ENCODE measurements at regions of chr10 and their contacts with region 1.

Region 1: DNA sequence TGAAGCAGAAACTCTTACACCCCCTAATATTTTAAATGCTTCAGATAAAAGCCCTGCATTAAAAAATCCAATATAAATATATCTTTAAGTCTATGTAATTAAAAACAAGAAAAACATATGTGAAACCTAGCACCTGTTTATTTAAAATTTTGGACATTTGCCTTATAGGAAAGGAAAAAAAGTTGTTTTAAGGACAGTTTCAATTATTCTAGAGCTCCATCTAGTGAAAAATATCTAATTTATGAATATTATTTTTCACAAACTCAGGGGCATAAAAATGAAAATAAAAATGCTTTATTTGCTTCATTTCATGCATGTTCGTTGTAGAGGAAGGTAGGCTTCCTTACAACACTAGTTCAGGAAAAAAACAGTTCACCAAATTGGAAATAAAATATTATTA is 26.1 kb downstream of the ENKUR start:
- DNase-seq: no peak
- H3K4me3 ChIP-seq: no peak overlapping the region
- H3K27ac ChIP-seq: no peak overlapping the region
- H3K4me1 ChIP-seq: no peaks in the 10 kb centered on the region
- H3K27me3 ChIP-seq: no peaks in the 10 kb centered on the region
- CTCF ChIP-seq: peak; percentile 60
- EP300 ChIP-seq: no peak
- RAD21 ChIP-seq: peak; percentile 45; the same call in 1 of the 2 replicates

Region 2: GRCh38 chr10:24642622-24643417 is 347.0 kb before region 1 on chr10:
- CTCF ChIA-PET with region 1: interaction called, 17 read pairs
- POLR2A ChIA-PET with region 1: no interaction called
- DNase-seq: peak; percentile 60
- H3K4me3 ChIP-seq: no peak overlapping the region
- H3K27ac ChIP-seq: peak overlapping the region in 1 of 2 experiments; percentile 27; a peak in 1 of 4 replicates
- H3K4me1 ChIP-seq: peaks cover 0 to 4% of the 10 kb centered on the region in 2 experiments; a peak in 2 of 4 replicates
- H3K27me3 ChIP-seq: no peaks in the 10 kb centered on the region
- CTCF ChIP-seq: peak; percentile 85
- EP300 ChIP-seq: no peak
- RAD21 ChIP-seq: peak; percentile 94

Region 3: DNA sequence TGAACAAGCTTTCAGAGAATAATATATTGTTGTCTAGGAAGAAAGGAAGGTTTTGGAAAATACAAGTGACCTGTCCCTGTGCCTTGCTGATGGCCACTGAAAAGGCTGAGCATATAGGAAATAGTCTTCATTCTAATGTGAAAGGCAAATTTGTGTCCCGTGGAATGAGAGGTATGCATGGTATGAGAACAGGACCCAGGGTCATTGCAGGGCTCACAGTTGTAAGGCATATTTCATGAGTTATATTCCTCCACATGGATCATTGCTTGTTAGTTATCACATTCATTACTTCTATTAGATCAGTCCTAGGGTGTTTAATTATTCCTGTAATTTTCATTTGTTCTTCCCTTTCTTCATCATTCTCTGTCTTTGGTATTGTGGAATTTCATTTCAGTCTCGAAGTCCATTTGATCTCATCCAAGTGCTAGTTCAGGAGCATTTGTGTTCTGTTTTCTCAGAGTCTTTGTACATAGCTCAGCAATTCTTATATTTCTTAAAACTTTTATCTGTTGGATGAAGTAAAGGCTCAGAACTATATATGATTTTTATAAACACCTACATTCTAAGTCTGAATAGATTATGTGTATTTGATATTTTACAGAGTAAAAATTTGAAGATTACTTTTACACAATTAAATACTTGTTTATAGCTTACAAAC is 226.8 kb before region 1 on chr10:
- CTCF ChIA-PET with region 1: no interaction called
- POLR2A ChIA-PET with region 1: no interaction called
- DNase-seq: no peak
- H3K4me3 ChIP-seq: no peak overlapping the region
- H3K27ac ChIP-seq: no peak overlapping the region
- H3K4me1 ChIP-seq: no peaks in the 10 kb centered on the region; a peak in 1 of 4 replicates
- H3K27me3 ChIP-seq: no peaks in the 10 kb centered on the region
- CTCF ChIP-seq: no peak
- EP300 ChIP-seq: no peak
- RAD21 ChIP-seq: no peak

Region 4: DNA sequence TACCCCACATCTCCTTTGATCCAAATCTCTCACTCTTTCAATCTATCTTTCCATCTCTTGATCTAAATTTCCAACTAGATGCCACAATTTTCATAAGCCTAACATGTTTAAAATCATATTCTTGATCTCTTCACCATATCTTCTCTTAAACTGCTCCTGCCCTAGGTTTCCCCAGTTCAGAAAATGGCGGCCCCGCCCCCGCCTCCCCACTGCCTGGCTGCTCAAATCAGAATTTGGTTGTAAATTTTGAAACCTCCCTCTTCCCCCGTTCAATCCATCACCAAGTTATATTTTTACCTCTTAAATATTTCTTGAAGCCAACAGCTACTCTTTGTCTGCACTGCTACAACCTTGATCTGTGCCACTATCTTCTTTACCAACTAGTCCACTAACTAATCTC is 10.2 kb before region 1 on chr10:
- CTCF ChIA-PET with region 1: no interaction called
- POLR2A ChIA-PET with region 1: no interaction called
- DNase-seq: no peak
- H3K4me3 ChIP-seq: no peak overlapping the region
- H3K27ac ChIP-seq: no peak overlapping the region
- H3K4me1 ChIP-seq: no peaks in the 10 kb centered on the region
- H3K27me3 ChIP-seq: no peaks in the 10 kb centered on the region
- CTCF ChIP-seq: no peak
- EP300 ChIP-seq: no peak
- RAD21 ChIP-seq: no peak

Region 5: DNA sequence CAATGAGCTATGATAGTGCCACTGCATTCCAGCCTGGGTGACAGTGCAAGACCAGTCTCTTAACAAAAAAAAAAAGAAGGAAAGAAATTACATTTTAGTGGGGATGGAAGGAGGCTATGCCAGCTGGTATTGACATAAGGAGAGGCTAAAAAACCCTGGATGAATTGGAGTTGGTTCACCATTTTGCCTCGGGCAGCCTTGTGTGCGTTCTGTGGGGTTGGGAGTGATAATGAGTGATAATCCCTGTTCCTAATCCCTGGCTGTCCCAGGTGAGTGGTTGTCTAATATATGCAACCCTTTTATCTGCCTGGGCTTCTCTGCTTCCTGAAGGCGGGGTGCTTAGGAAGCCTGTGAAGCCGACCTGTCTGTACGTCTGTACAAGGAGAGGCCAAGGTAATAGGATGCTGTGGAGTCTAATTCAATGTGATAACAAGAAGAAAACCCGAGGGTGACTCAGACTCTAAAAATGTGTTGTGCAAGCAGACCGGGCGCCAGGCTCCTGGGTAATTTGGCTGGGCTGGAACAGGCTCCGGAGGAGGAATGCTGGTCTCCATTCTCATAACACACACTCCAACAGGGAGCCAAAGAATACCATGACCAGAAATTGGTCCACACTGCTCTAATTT is 70.0 kb after region 1 on chr10:
- CTCF ChIA-PET with region 1: no interaction called
- POLR2A ChIA-PET with region 1: no interaction called
- DNase-seq: no peak
- H3K4me3 ChIP-seq: no peak overlapping the region
- H3K27ac ChIP-seq: peak overlapping the region in 1 of 2 experiments; percentile 40; a peak in 2 of 4 replicates
- H3K4me1 ChIP-seq: no peaks in the 10 kb centered on the region; a peak in 1 of 4 replicates
- H3K27me3 ChIP-seq: no peaks in the 10 kb centered on the region
- CTCF ChIP-seq: no peak
- EP300 ChIP-seq: no peak
- RAD21 ChIP-seq: no peak